CD4-positive, alpha-beta T cell (primary cell): ENCODE measurements at regions of chr11 and their contacts with region 1.

Region 1: GRCh38 chr11:64317957-64318693 is at the start of gene PRDX5:
- DNase-seq: peak; percentile 88 to 99 (median 94)
- ATAC-seq: peak; percentile 72
- H3K4me3 ChIP-seq: peak within 1 kb of the TSS; percentile 96
- H3K4me3 Mint-ChIP-seq: peak within 1 kb of the TSS; percentile 92
- H3K27ac ChIP-seq: peak within 1 kb of the TSS; percentile 93 to 99
- H3K27ac Mint-ChIP-seq: peak within 1 kb of the TSS; percentile 98
- H3K4me1 ChIP-seq: peaks cover 34% of the 10 kb centered on the region
- H3K4me1 Mint-ChIP-seq: peaks cover 40% of the 10 kb centered on the region
- H3K27me3 ChIP-seq: no peaks in the 10 kb centered on the region
- H3K27me3 Mint-ChIP-seq: no peaks in the 10 kb centered on the region
- CTCF ChIP-seq: peak; percentile 40
- total RNA-seq, gene PRDX5: 31.7 to 33.1 TPM

Region 2: GRCh38 chr11:64148200-64148916 is 169.8 kb before region 1 on chr11:
- CTCF ChIA-PET with region 1: no interaction called
- POLR2A ChIA-PET with region 1: no interaction called
- intact Hi-C with region 1: no loop called
- DNase-seq: peak; percentile 50 to 83 (median 68)
- ATAC-seq: peak; percentile 47
- H3K4me3 ChIP-seq: no peak overlapping the region
- H3K4me3 Mint-ChIP-seq: no peak overlapping the region
- H3K27ac ChIP-seq: no peak overlapping the region
- H3K27ac Mint-ChIP-seq: no peak overlapping the region
- H3K4me1 ChIP-seq: peaks cover 24% of the 10 kb centered on the region
- H3K4me1 Mint-ChIP-seq: peaks cover 14% of the 10 kb centered on the region
- H3K27me3 ChIP-seq: no peaks in the 10 kb centered on the region
- H3K27me3 Mint-ChIP-seq: no peaks in the 10 kb centered on the region
- CTCF ChIP-seq: peak; percentile 96

Region 3: DNA sequence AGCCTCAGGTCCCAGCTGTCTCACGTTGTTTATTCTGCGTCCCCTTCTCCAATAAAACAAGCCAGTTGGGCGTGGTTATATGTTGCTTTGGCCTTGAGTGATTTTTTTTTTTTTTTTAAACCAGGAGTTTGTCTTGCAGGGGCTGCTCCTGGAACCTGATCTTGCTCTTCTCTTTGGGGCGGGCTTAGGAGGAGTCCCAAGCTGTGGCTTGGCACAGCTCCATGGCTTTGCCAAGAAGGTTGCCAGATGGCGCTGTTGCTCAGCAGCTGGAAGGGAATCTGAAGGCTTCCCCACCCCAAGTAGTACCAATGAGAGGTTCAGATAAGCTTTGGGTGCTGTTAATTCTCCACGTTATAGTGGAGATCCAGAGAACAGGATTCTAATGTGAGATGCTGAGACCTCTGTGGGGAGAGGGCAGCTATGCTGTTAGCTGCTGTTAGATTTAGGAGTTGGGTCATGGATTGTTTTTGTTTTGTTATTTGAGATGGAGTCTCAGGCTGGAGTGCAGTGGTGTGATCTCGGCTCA is 113.6 kb before region 1 on chr11:
- CTCF ChIA-PET with region 1: interaction called, 13 read pairs
- POLR2A ChIA-PET with region 1: interaction called, 64 read pairs
- intact Hi-C with region 1: no loop called
- DNase-seq: peak; percentile 77 to 95 (median 84)
- ATAC-seq: peak; percentile 63
- H3K4me3 ChIP-seq: no peak overlapping the region
- H3K4me3 Mint-ChIP-seq: peak overlapping the region; percentile 93
- H3K27ac ChIP-seq: no peak overlapping the region
- H3K27ac Mint-ChIP-seq: peak overlapping the region; percentile 78
- H3K4me1 ChIP-seq: peaks cover 50% of the 10 kb centered on the region
- H3K4me1 Mint-ChIP-seq: peaks cover 49% of the 10 kb centered on the region
- H3K27me3 ChIP-seq: no peaks in the 10 kb centered on the region
- H3K27me3 Mint-ChIP-seq: no peaks in the 10 kb centered on the region
- CTCF ChIP-seq: peak; percentile 69

Region 4: DNA sequence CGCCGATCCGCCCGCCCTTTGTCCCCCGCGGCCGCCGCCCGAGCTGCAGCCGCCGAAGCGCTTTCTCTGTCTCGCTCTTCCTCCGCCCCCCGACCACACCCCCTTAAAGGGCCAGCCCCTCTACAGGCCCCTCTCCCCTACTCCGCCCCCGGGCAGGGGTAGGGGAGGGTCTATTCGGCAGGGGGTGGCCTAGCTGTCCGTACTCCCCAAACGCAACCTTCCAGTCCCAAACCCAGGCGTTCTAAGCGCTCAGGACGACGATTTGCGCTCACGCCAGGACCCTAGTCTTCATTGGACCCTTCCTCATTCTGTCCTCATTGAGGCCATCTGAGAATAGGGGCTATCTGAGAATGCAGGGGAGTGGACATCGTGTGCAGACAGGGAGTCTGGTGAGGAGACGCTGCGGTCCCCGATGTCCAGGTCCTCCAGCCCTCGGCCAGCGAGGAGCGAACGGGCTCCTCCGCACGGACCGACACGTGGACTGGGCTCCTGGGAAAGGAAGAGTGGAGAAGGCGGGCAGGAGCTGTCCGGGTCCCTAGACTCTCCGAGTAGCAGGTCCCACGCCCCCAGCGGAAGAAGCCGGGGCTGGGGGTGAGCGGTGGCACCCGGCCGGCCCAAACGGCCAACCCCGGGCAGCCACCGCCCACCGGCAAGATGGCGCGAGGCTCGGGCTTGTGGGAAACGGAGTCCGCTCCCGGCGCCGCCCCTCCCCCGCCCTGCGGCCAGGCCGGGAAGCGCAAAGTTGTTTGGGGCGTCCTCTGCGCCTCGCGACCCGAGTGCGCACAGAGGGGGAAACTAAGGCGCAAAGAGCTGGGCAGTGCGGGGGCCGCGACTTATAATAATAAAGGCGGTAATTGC is 71.0 kb before region 1 on chr11 and contains the start of gene PPP1R14B:
- CTCF ChIA-PET with region 1: interaction called, 6 read pairs
- POLR2A ChIA-PET with region 1: interaction called, 26 read pairs
- intact Hi-C with region 1: no loop called
- DNase-seq: peak; percentile 60 to 89 (median 76)
- ATAC-seq: peak; percentile 63
- H3K4me3 ChIP-seq: peak within 1 kb of the TSS; percentile 90
- H3K4me3 Mint-ChIP-seq: peak within 1 kb of the TSS; percentile 94
- H3K27ac ChIP-seq: peak within 1 kb of the TSS; percentile 48 to 57
- H3K27ac Mint-ChIP-seq: peak within 1 kb of the TSS; percentile 82
- H3K4me1 ChIP-seq: peaks cover 61% of the 10 kb centered on the region
- H3K4me1 Mint-ChIP-seq: peaks cover 41% of the 10 kb centered on the region
- H3K27me3 ChIP-seq: no peaks in the 10 kb centered on the region
- H3K27me3 Mint-ChIP-seq: no peaks in the 10 kb centered on the region
- CTCF ChIP-seq: no peak
- total RNA-seq, gene PPP1R14B: 17.1 to 21.0 TPM

Region 5: GRCh38 chr11:64304316-64305072 is 13.6 kb before region 1 on chr11:
- CTCF ChIA-PET with region 1: interaction called, 30 read pairs
- POLR2A ChIA-PET with region 1: interaction called, 105 read pairs
- intact Hi-C with region 1: loop called (anchors 1 kb)
- DNase-seq: peak; percentile 88 to 98 (median 94)
- ATAC-seq: peak; percentile 27
- H3K4me3 ChIP-seq: peak overlapping the region; percentile 92
- H3K4me3 Mint-ChIP-seq: peak overlapping the region; percentile 98
- H3K27ac ChIP-seq: peak overlapping the region; percentile 84 to 93
- H3K27ac Mint-ChIP-seq: peak overlapping the region; percentile 96
- H3K4me1 ChIP-seq: peaks cover 55% of the 10 kb centered on the region
- H3K4me1 Mint-ChIP-seq: peaks cover 42% of the 10 kb centered on the region
- H3K27me3 ChIP-seq: peaks cover 25 to 26% of the 10 kb centered on the region in 2 experiments
- H3K27me3 Mint-ChIP-seq: peaks cover 34% of the 10 kb centered on the region
- CTCF ChIP-seq: peak; percentile 92

Region 6: DNA sequence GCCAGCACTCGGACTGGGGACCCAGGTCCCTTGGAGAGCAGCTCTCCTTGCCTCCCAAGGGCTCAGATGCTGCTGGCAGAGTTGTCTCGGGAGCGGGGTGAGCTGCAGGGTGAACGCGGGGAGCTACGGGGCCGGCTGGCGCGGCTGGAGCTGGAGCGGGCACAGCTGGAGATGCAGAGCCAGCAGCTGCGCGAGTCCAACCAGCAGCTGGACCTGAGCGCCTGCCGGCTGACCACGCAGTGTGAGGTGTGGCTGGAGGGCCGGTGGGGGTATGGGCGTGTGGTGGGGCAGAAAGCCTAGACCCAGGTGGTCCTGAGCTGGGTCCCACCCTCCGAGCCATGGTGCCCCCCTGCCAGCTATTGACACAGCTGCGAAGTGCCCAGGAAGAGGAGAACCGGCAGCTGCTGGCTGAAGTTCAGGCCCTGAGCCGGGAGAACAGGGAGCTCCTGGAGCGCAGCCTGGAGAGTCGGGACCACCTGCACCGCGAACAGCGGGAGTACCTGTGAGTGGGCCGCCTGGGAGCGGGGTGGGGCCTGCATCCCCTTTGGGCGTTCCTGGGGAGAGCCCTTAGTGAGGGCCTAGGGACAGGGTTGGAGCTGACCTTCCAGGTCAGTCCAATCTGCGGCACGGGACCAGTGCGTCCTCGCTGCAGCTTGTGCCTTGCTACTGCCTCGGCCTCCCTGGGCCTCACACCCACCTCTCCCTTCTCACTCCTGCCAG is 35.0 kb after region 1 on chr11:
- CTCF ChIA-PET with region 1: interaction called, 12 read pairs
- POLR2A ChIA-PET with region 1: interaction called, 45 read pairs
- intact Hi-C with region 1: loop called in 1 of 2 experiments (anchors 5 kb)
- DNase-seq: no peak
- ATAC-seq: no peak
- H3K4me3 ChIP-seq: no peak overlapping the region
- H3K4me3 Mint-ChIP-seq: no peak overlapping the region
- H3K27ac ChIP-seq: no peak overlapping the region
- H3K27ac Mint-ChIP-seq: no peak overlapping the region
- H3K4me1 ChIP-seq: peaks cover 14% of the 10 kb centered on the region
- H3K4me1 Mint-ChIP-seq: peaks cover 11% of the 10 kb centered on the region
- H3K27me3 ChIP-seq: no peaks in the 10 kb centered on the region
- H3K27me3 Mint-ChIP-seq: no peaks in the 10 kb centered on the region
- CTCF ChIP-seq: no peak

Region 7: GRCh38 chr11:64742889-64743590 is 424.9 kb after region 1 on chr11:
- CTCF ChIA-PET with region 1: no interaction called
- POLR2A ChIA-PET with region 1: interaction called, 10 read pairs
- intact Hi-C with region 1: no loop called
- DNase-seq: peak; percentile 58 to 87 (median 72)
- ATAC-seq: peak; percentile 13
- H3K4me3 ChIP-seq: peak overlapping the region; percentile 98
- H3K4me3 Mint-ChIP-seq: peak overlapping the region; percentile 85
- H3K27ac ChIP-seq: peak overlapping the region; percentile 89 to 95
- H3K27ac Mint-ChIP-seq: peak overlapping the region; percentile 92
- H3K4me1 ChIP-seq: peaks cover 67% of the 10 kb centered on the region
- H3K4me1 Mint-ChIP-seq: peaks cover 46% of the 10 kb centered on the region
- H3K27me3 ChIP-seq: no peaks in the 10 kb centered on the region
- H3K27me3 Mint-ChIP-seq: no peaks in the 10 kb centered on the region
- CTCF ChIP-seq: peak; percentile 80